BJ (cell line): ENCODE measurements at regions of chr9 and their contacts with region 1.

Region 1: DNA sequence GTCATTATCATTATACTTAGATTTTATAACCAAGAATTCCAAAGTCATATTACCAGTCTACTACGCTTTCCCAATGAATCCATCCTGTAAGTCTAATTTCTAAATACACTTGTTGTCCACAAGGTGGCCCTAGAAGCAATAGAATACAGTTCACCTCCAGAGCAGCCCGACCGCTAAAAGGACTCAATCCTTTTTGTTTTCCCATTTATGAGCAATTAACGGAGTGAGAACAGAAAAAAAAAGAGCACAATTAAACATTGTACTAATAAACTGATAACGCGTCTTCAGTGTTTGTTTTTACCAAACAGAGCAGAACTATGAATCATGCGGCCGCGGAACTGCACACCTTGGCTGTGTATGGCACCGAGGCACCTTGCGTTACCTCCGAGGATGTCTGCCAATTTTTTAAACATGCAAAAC is 160.7 kb upstream of the DAPK1 start:
- DNase-seq: no peak
- H3K4me3 ChIP-seq: peak overlapping the region; percentile 16
- H3K27me3 ChIP-seq: 0 out of 2 replicates have a peak, but pooled peaks cover 2% of the 10 kb centered on the region
- CTCF ChIP-seq: peak; percentile 59

Region 2: DNA sequence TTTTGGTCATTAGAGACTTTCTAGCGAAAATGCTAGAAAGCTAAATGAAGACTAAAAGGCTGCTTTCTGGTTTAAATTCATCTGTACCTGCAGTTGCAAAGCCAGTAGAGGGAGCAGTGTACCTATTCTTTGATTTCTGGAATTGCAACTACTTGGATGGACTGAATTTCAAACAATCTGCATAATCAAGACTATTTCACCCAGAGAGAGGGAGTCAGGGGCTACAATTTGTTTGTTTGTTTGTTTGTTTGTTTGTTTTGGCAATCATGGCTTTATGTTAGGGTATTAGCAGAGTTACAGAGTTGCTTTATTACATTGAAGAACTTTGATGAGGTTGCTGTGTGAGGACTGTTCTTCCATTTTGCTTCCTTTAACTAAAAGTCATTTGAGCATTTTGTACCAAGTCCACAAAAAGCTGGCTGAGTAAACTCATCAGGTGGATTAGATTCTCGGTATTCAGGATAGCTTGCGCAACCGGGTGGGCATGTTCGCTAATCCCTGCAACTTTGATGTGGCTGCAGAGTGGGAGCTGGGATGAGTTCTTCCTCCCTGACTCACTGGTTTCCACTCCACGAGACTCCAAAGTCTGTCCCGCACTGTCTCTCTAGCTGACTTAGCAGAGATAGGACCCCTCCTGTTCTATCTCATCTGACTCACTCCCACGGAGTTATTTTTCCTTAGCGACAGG is 902.7 kb before region 1 on chr9:
- CTCF ChIA-PET with region 1: interaction called, 10 read pairs
- POLR2A ChIA-PET with region 1: no interaction called
- DNase-seq: no peak
- H3K4me3 ChIP-seq: no peak overlapping the region
- H3K27me3 ChIP-seq: no peaks in the 10 kb centered on the region
- CTCF ChIP-seq: peak; percentile 78

Region 3: DNA sequence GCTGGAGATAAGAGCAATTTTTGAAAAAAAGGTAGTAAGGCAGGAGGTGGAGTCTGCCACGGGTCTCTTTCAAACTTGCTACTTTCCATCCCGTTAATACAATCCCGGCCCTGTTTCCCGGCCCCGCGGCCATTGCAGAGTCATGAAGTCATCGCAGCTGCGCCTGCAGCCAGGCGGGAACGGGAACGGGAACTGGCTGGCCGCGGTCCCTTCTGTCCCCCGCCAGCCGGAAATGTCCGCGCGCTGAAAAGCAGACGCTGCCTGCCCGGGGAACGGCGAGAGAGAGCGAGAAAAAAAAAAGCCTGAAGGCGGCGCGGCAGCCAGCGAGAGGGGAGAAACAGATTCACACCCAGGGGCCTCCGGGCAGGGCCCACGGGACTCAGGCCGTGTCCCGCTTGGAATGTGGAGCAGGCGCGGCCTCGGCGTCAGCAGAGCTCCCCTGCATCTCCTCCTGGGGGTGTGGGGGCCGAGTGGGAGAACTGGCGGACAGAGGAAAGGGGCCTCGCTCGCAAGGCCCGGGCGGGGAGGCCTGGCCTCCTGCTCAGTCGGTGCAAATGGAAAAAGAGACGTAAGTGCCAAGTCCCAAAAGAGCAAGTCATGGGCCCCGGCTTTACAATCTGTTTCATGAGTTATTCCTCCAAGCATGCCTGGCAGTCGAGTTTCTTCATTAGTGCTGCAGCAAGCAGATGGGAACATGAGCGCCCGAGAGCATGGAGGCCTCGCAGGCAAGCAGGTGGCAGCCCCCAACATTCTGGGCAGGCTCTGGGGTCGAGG is 188.4 kb before region 1 on chr9:
- CTCF ChIA-PET with region 1: no interaction called
- POLR2A ChIA-PET with region 1: no interaction called
- DNase-seq: peak; percentile 27
- H3K4me3 ChIP-seq: peak overlapping the region; percentile 19
- H3K27me3 ChIP-seq: no peaks in the 10 kb centered on the region
- CTCF ChIP-seq: peak; percentile 22; the same call in 1 of the 2 replicates

Region 4: DNA sequence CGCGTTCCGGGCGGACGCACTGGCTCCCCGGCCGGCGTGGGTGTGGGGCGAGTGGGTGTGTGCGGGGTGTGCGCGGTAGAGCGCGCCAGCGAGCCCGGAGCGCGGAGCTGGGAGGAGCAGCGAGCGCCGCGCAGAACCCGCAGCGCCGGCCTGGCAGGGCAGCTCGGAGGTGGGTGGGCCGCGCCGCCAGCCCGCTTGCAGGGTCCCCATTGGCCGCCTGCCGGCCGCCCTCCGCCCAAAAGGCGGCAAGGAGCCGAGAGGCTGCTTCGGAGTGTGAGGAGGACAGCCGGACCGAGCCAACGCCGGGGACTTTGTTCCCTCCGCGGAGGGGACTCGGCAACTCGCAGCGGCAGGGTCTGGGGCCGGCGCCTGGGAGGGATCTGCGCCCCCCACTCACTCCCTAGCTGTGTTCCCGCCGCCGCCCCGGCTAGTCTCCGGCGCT is 160.7 kb after region 1 on chr9 and contains the start of gene DAPK1:
- CTCF ChIA-PET with region 1: interaction called, 10 read pairs
- POLR2A ChIA-PET with region 1: no interaction called
- DNase-seq: no peak
- H3K4me3 ChIP-seq: peak within 1 kb of the TSS; percentile 48
- H3K27me3 ChIP-seq: peaks cover 10% of the 10 kb centered on the region
- CTCF ChIP-seq: no peak
- polyA plus RNA-seq, gene DAPK1: 4.7 and 5.4 TPM in 2 replicates